Mammary epithelial cell (primary cell): ENCODE measurements at regions of chr3 and their contacts with region 1.

Region 1: GRCh38 chr3:158644345-158644908 is at the start of gene GFM1:
- DNase-seq: peak; percentile 95
- H3K4me3 ChIP-seq: peak within 1 kb of the TSS; percentile 84 to 94 (median 93)
- H3K27ac ChIP-seq: peak within 1 kb of the TSS; percentile 65
- H3K4me1 ChIP-seq: peaks cover 11% of the 10 kb centered on the region
- H3K27me3 ChIP-seq: no peaks in the 10 kb centered on the region
- CTCF ChIP-seq: peak; percentile 89 to 91
- total RNA-seq, gene GFM1: 42.1 to 52.3 TPM

Region 2: GRCh38 chr3:157618075-157618760 is 1026.2 kb before region 1 on chr3:
- CTCF ChIA-PET with region 1: no interaction called
- dilution Hi-C with region 1: no loop called
- in situ Hi-C with region 1: no loop called
- intact Hi-C with region 1: loop called (anchors 5 kb)
- DNase-seq: peak; percentile 79
- H3K4me3 ChIP-seq: no peak overlapping the region
- H3K27ac ChIP-seq: no peak overlapping the region
- H3K4me1 ChIP-seq: peaks cover 4% of the 10 kb centered on the region
- H3K27me3 ChIP-seq: no peaks in the 10 kb centered on the region
- CTCF ChIP-seq: peak; percentile 57 to 61

Region 3: GRCh38 chr3:158539414-158540014 is 104.9 kb before region 1 on chr3:
- CTCF ChIA-PET with region 1: no interaction called
- dilution Hi-C with region 1: no loop called
- in situ Hi-C with region 1: no loop called
- intact Hi-C with region 1: loop called (anchors 5 kb)
- DNase-seq: peak; percentile 12
- H3K4me3 ChIP-seq: no peak overlapping the region
- H3K27ac ChIP-seq: no peak overlapping the region
- H3K4me1 ChIP-seq: no peaks in the 10 kb centered on the region
- H3K27me3 ChIP-seq: no peaks in the 10 kb centered on the region
- CTCF ChIP-seq: peak; percentile 51 to 59

Region 4: DNA sequence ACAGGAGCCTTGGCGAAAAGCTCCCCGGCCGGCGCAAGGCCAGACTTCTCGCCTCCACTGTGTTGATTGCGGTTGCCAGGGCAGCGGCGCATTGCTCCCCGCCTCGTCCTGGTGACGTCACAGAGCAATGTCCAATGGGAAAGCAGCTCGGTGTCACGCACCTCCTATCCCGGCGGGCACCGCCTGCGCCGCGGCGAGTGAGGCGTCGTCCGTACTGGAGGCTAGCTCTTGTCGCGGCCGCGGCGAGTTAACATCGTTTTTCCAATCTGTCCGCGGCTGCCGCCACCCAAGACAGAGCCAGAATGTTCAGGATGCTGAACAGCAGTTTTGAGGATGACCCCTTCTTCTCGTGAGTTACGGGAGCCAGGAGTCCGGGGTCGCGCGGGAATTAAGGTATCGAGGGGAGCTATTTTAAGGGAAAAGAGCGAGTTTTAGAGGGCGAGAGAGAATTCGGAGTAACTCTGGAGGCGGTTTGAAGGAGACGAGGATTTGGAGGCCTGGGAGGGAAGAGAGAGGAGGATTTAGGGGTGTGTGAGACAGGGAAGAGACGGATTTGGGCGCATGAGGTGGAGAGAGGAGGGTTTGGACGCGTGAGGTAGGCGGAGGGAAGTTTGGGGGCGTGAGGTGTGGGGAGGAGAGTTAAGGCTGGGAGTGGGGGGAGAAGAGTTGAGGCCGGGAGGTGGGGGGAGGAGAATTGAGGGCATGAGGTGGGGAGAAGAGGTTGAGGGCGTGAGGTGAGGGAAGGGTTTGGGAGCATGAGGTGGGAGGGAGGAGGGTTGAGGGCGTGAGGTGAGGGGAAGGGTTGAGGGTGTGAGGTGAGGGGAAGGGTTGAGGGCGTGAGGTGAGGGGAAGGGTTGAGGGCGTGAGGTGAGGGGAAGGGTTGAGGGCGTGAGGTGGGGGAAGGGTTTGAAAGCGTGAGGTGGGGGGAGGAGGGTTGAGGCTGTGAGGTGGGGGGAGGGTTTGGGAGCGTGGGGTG is 73.1 kb before region 1 on chr3 and contains the start of gene MLF1:
- CTCF ChIA-PET with region 1: no interaction called
- dilution Hi-C with region 1: no loop called
- in situ Hi-C with region 1: no loop called
- intact Hi-C with region 1: loop called (anchors 5 kb)
- DNase-seq: peak; percentile 94
- H3K4me3 ChIP-seq: peak within 1 kb of the TSS; percentile 48 to 77 (median 58)
- H3K27ac ChIP-seq: peak within 1 kb of the TSS; percentile 84
- H3K4me1 ChIP-seq: peaks cover 3% of the 10 kb centered on the region
- H3K27me3 ChIP-seq: no peaks in the 10 kb centered on the region
- CTCF ChIP-seq: no peak
- total RNA-seq, gene MLF1: 10.2 to 12.7 TPM

Region 5: GRCh38 chr3:158709666-158710083 is 65.2 kb after region 1 on chr3:
- CTCF ChIA-PET with region 1: interaction called, 11 read pairs
- dilution Hi-C with region 1: no loop called
- in situ Hi-C with region 1: no loop called
- intact Hi-C with region 1: no loop called
- DNase-seq: peak; percentile 90
- H3K4me3 ChIP-seq: no peak overlapping the region
- H3K27ac ChIP-seq: no peak overlapping the region
- H3K4me1 ChIP-seq: peaks cover 33% of the 10 kb centered on the region
- H3K27me3 ChIP-seq: no peaks in the 10 kb centered on the region
- CTCF ChIP-seq: no peak